Activated CD8-positive, alpha-beta T cell treated with anti-CD3 and anti-CD28 coated beads for 36 hours (primary cell): ENCODE measurements at regions of chr17 and their contacts with region 1.

Region 1: GRCh38 chr17:7561028-7561575 is 617 bp upstream of the SENP3 start:
- DNase-seq: peak; percentile 93
- ATAC-seq: peak; percentile 76
- H3K4me3 Mint-ChIP-seq: peak overlapping the region; percentile 85
- H3K27ac Mint-ChIP-seq: peak overlapping the region; percentile 91
- H3K4me1 Mint-ChIP-seq: peaks cover 52% of the 10 kb centered on the region
- H3K27me3 Mint-ChIP-seq: no peaks in the 10 kb centered on the region
- CTCF ChIP-seq: peak; percentile 79

Region 2: DNA sequence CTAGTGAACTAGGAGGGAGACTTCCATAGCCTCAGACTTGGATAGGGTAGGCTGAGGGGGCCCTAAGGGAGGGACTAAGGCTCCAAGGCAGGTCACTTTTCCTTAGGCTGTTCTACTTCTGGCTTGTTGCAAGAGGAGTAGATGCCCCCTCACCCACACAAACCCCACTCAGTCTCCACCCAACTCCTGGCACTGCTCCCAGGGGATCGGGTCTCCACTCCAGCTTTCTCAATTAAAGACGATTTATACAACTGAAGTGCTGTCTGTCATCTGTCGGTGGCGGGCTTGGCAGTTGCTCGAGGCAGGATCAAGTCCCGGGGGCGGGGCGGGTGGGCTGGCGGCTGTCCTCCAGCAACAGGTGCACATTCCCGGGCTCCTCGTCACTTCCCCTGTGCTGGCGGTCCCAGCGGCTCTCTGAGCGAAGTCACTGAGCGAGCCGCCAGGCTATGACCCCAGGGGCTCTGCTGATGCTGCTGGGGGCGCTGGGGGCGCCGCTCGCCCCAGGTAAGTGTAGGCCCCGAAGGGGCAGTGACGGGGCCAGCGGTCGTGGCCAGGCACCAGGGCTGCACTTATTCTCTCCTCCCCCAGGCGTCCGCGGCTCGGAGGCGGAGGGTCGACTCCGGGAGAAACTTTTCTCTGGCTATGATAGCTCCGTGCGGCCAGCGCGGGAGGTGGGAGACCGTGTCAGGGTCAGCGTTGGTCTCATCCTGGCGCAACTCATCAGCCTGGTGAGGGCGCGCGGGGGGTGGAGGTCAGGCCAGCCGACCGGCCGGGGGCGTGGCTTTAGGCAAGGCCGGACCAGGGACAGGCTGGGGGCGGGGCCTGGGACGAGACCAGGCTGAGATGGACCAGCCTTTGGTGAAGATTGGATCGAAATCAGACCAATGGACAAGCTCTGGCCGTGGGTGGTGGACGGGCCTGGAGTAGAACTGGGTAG is 116.2 kb before region 1 on chr17 and contains the start of gene CHRNB1:
- CTCF ChIA-PET with region 1: interaction called, 13 read pairs
- POLR2A ChIA-PET with region 1: interaction called, 3 read pairs
- intact Hi-C with region 1: no loop called
- DNase-seq: peak; percentile 44
- ATAC-seq: peak; percentile 5
- H3K4me3 Mint-ChIP-seq: peak within 1 kb of the TSS; percentile 64
- H3K27ac Mint-ChIP-seq: no peak within 1 kb of the TSS
- H3K4me1 Mint-ChIP-seq: peaks cover 25% of the 10 kb centered on the region
- H3K27me3 Mint-ChIP-seq: peaks cover 57% of the 10 kb centered on the region
- CTCF ChIP-seq: no peak
- total RNA-seq, gene CHRNB1: 11.5 to 11.7 TPM

Region 3: GRCh38 chr17:7509937-7510336 is 51.2 kb before region 1 on chr17:
- CTCF ChIA-PET with region 1: interaction called, 186 read pairs
- POLR2A ChIA-PET with region 1: interaction called, 23 read pairs
- intact Hi-C with region 1: no loop called
- DNase-seq: no peak
- ATAC-seq: no peak
- H3K4me3 Mint-ChIP-seq: no peak overlapping the region
- H3K27ac Mint-ChIP-seq: no peak overlapping the region
- H3K4me1 Mint-ChIP-seq: no peaks in the 10 kb centered on the region
- H3K27me3 Mint-ChIP-seq: no peaks in the 10 kb centered on the region
- CTCF ChIP-seq: no peak

Region 4: GRCh38 chr17:7530023-7530900 is 30.8 kb before region 1 on chr17:
- CTCF ChIA-PET with region 1: interaction called, 165 read pairs
- POLR2A ChIA-PET with region 1: interaction called, 5 read pairs
- intact Hi-C with region 1: no loop called
- DNase-seq: no peak
- ATAC-seq: no peak
- H3K4me3 Mint-ChIP-seq: no peak overlapping the region
- H3K27ac Mint-ChIP-seq: no peak overlapping the region
- H3K4me1 Mint-ChIP-seq: no peaks in the 10 kb centered on the region
- H3K27me3 Mint-ChIP-seq: no peaks in the 10 kb centered on the region
- CTCF ChIP-seq: no peak

Region 5: DNA sequence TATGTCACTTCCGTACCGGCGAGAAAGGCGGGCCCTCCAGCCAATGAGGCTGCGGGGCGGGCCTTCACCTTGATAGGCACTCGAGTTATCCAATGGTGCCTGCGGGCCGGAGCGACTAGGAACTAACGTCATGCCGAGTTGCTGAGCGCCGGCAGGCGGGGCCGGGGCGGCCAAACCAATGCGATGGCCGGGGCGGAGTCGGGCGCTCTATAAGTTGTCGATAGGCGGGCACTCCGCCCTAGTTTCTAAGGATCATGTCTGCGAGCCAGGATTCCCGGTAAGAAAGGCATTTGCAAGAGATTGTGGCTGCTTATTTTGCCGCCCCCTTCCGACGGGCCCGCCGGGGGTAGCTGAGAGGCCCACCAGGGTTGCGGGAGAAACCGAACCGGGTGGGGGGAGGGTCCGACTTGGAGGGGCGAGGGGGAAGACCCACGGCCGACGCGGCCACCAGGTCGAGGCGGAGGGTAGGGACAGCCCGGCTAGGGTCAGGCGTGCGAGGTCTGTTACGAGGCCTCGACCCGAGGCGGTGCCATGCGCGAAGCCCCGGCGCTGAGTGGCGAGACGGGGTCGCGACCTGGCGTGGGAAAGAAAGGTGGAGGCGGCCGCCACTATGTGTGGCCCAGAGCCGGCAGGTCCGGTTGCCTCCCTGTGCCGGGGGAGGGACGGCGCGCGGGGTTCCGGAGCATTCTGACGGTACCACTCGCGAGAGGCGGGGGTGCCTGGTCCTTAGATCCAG is 11.7 kb after region 1 on chr17:
- CTCF ChIA-PET with region 1: interaction called, 28 read pairs
- POLR2A ChIA-PET with region 1: interaction called, 100 read pairs
- intact Hi-C with region 1: no loop called
- DNase-seq: peak; percentile 99
- ATAC-seq: peak; percentile 92
- H3K4me3 Mint-ChIP-seq: peak overlapping the region; percentile 98
- H3K27ac Mint-ChIP-seq: peak overlapping the region; percentile 100
- H3K4me1 Mint-ChIP-seq: peaks cover 45% of the 10 kb centered on the region
- H3K27me3 Mint-ChIP-seq: peaks cover 1% of the 10 kb centered on the region
- CTCF ChIP-seq: no peak